Activated CD8-positive, alpha-beta T cell treated with anti-CD3 and anti-CD28 coated beads, Interleukin-2, amount 10 ng/mL, durations not matched to agents 7 days and 5 days (primary cell): ENCODE measurements at regions of chr1 and their contacts with region 1.

Region 1: DNA sequence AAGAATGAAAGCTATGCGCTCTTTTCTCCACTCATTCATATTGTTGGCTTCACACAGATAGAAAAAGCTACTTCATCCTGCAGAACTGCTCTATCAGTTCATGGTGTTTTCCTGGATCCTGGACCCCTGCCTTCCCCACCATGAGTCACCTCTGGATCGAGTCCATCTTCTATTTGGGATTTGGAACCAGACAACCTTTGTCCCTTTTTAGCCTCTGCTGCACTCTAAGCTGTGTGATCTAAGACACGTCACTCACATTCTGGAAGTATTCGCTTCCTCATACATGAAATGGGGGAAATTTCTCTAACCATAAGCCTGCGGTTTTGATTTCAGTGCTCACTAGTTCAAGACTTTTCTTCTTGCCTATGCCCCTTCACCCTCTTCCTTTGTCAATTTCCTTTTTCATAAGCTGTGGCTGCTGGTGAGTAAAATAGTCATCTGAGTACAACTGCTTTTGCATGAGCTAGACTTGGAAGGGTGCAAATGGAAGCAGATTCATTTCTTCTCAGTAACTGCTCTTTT is 14.1 kb upstream of the DEGS1 start:
- DNase-seq: peak; percentile 53
- ATAC-seq: peak; percentile 83
- H3K4me3 Mint-ChIP-seq: peak overlapping the region; percentile 40
- H3K27ac Mint-ChIP-seq: peak overlapping the region; percentile 74
- H3K4me1 Mint-ChIP-seq: peaks cover 45% of the 10 kb centered on the region
- H3K27me3 Mint-ChIP-seq: peaks cover 5% of the 10 kb centered on the region

Region 2: DNA sequence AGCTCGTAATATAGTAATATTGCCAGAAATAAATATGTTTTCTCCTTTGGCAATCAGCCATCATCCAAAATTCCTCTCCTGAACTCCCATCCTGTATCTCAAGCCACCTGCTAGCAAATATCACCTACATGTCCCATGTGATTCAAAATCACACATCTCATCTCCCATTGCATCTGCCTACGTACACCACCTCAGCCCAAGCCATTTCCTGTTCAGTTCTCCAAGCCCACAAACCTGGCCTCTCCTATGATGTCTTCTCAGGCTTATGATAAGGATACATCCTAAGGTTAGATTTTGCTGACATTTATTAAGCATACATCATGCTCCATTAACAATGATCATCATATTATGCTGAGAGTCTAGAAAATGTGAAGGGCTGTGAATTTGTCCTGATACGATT is 17.8 kb before region 1 on chr1:
- CTCF ChIA-PET with region 1: interaction called, 24 read pairs
- POLR2A ChIA-PET with region 1: interaction called, 3 read pairs
- DNase-seq: no peak
- ATAC-seq: peak; percentile 69
- H3K4me3 Mint-ChIP-seq: no peak overlapping the region
- H3K27ac Mint-ChIP-seq: peak overlapping the region; percentile 23
- H3K4me1 Mint-ChIP-seq: peaks cover 15% of the 10 kb centered on the region
- H3K27me3 Mint-ChIP-seq: no peaks in the 10 kb centered on the region

Region 3: GRCh38 chr1:224182866-224183590 is 14.1 kb after region 1 on chr1 and contains the start of gene DEGS1:
- CTCF ChIA-PET with region 1: interaction called, 13 read pairs
- POLR2A ChIA-PET with region 1: interaction called, 13 read pairs
- DNase-seq: peak; percentile 87
- ATAC-seq: peak; percentile 85
- H3K4me3 Mint-ChIP-seq: peak within 1 kb of the TSS; percentile 91
- H3K27ac Mint-ChIP-seq: peak within 1 kb of the TSS; percentile 90
- H3K4me1 Mint-ChIP-seq: peaks cover 49% of the 10 kb centered on the region
- H3K27me3 Mint-ChIP-seq: no peaks in the 10 kb centered on the region
- total RNA-seq, gene DEGS1: 71.3 to 77.2 TPM